Endothelial cell of umbilical vein (primary cell): ENCODE measurements at regions of chr1 and their contacts with region 1.

Region 1: DNA sequence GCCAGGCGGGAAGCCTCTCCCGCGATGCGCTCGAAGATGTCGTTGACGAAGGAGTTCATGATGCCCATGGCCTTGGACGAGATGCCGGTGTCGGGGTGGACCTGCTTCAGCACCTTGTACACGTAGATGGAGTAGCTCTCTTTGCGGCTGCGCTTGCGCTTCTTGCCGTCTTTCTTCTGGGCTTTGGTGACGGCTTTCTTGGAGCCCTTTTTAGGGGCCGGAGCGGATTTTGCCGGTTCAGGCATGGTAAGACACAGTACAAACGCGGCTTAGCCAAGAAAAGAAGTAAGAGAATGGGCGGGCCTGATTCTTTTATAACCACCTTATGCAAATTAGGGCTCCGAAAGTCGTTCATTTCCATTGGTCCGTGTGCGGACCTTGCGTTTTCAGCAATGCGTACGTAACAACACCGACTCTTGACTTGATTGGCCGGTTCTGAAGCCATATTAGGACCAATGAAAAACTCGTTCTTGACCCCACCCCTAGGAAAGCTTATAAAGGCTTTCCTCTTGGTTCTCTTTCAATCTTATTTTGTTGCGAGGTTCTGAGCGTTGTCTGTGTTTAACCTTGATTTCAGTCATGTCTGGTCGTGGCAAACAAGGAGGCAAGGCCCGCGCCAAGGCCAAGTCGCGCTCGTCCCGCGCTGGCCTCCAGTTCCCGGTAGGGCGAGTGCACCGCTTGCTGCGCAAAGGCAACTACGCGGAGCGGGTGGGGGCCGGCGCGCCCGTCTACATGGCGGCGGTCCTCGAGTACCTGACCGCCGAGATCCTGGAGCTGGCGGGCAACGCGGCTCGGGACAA is 12.8 kb upstream of the BOLA1 start:
- DNase-seq: peak; percentile 98
- H3K4me3 ChIP-seq: peak overlapping the region; percentile 19 to 91 (median 67)
- H3K27ac ChIP-seq: peak overlapping the region; percentile 97
- H3K4me1 ChIP-seq: peaks cover 16% of the 10 kb centered on the region
- H3K27me3 ChIP-seq: no peaks in the 10 kb centered on the region
- CTCF ChIP-seq: no peak
- POLR2A ChIP-seq: peak; percentile 97

Region 2: DNA sequence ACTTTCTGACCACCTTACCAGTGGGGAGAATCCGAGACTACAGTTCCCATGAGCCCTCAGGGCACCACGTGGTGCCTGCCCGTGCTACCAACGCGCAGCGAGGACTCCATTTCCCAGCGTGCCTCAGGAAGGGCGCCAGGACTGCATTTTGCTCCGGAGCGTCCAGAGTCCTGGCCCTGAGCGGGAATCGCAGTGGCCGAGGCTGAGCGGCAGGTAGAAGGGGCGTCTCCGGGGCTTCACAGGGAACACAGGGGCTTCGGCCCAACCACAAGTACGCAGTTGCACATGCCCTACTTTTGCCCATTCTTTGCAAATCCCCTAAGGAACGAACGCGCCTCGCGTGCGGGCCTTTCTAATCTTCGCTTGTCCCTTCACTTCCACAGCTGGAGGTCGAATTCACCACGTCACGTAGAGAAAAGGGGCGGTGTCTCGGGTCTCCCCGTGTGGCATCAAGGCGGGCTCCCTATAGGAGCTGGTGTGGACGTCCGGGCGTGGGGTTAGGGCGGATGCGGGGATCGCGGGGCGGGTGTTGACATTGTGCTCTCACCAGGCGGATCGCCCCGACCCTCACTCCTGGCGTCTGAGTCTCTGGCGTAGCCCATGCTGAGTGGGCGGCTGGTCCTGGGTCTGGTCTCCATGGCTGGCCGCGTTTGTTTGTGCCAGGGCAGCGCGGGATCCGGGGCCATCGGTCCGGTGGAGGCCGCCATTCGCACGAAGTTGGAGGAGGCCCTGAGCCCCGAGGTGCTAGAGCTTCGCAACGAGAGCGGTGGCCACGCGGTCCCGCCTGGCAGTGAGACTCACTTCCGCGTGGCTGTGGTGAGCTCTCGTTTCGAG is 13.1 kb after region 1 on chr1 and contains the start of gene BOLA1:
- CTCF ChIA-PET with region 1: interaction called, 6 read pairs
- POLR2A ChIA-PET with region 1: interaction called, 13 read pairs
- dilution Hi-C with region 1: no loop called
- intact Hi-C with region 1: loop called (anchors 1 kb)
- DNase-seq: peak; percentile 92
- H3K4me3 ChIP-seq: peak within 1 kb of the TSS in 2 of 3 experiments; percentile 12 to 55
- H3K27ac ChIP-seq: peak within 1 kb of the TSS; percentile 12
- H3K4me1 ChIP-seq: peaks cover 5% of the 10 kb centered on the region
- H3K27me3 ChIP-seq: no peaks in the 10 kb centered on the region
- CTCF ChIP-seq: no peak
- POLR2A ChIP-seq: peak; percentile 72
- total RNA-seq, gene BOLA1: 7.0 and 10.8 TPM in 2 replicates

Region 3: DNA sequence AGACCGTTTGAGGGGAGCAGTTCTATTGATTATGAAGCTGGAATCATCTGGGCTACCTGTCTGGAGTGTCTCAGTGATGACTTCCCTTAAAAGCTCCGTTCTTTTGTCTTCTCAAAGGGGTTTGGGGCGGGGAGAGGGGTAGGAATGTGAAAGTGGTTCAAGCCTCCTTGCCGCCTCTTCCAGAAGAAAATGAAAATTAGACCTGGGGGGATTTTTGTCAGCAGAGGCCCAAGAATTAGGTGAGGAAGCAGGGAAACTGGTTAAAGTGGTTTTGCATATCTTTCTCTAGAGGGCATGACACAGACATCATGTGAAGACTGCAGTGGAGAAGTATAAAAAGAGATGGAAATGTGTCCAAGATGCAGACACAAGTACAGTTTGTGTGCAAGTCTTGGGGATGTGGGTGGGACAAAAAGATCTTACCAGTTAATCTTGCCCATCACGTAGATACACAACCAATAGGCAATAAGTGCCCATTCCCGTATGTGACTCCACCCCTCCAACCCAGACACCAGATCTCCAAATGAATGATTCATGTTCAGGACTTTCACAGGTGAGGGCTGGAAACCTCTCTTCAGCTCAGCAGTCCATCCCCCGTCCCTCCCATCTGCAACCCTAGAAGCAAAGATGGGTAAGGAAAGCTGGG is 50.6 kb after region 1 on chr1:
- CTCF ChIA-PET with region 1: interaction called, 38 read pairs
- POLR2A ChIA-PET with region 1: interaction called, 8 read pairs
- dilution Hi-C with region 1: no loop called
- intact Hi-C with region 1: loop called (anchors 1 kb)
- DNase-seq: peak; percentile 36
- H3K4me3 ChIP-seq: peak overlapping the region in 1 of 3 experiments; percentile 29
- H3K27ac ChIP-seq: no peak overlapping the region
- H3K4me1 ChIP-seq: peaks cover 33% of the 10 kb centered on the region
- H3K27me3 ChIP-seq: no peaks in the 10 kb centered on the region
- CTCF ChIP-seq: no peak
- POLR2A ChIP-seq: no peak

Region 4: GRCh38 chr1:149962123-149962548 is 75.5 kb after region 1 on chr1:
- CTCF ChIA-PET with region 1: interaction called, 6 read pairs
- POLR2A ChIA-PET with region 1: no interaction called
- dilution Hi-C with region 1: no loop called
- intact Hi-C with region 1: loop called (anchors 1 kb)
- DNase-seq: peak; percentile 81
- H3K4me3 ChIP-seq: no peak overlapping the region
- H3K27ac ChIP-seq: no peak overlapping the region
- H3K4me1 ChIP-seq: no peaks in the 10 kb centered on the region
- H3K27me3 ChIP-seq: no peaks in the 10 kb centered on the region
- CTCF ChIP-seq: peak; percentile 48 to 53
- POLR2A ChIP-seq: no peak

Region 5: GRCh38 chr1:150051089-150051373 is 164.4 kb after region 1 on chr1:
- CTCF ChIA-PET with region 1: interaction called, 24 read pairs
- POLR2A ChIA-PET with region 1: no interaction called
- dilution Hi-C with region 1: loop called (anchors 25 kb)
- intact Hi-C with region 1: loop called (anchors 1 kb)
- DNase-seq: no peak
- H3K4me3 ChIP-seq: no peak overlapping the region
- H3K27ac ChIP-seq: no peak overlapping the region
- H3K4me1 ChIP-seq: no peaks in the 10 kb centered on the region
- H3K27me3 ChIP-seq: no peaks in the 10 kb centered on the region
- CTCF ChIP-seq: no peak
- POLR2A ChIP-seq: no peak

Region 6: DNA sequence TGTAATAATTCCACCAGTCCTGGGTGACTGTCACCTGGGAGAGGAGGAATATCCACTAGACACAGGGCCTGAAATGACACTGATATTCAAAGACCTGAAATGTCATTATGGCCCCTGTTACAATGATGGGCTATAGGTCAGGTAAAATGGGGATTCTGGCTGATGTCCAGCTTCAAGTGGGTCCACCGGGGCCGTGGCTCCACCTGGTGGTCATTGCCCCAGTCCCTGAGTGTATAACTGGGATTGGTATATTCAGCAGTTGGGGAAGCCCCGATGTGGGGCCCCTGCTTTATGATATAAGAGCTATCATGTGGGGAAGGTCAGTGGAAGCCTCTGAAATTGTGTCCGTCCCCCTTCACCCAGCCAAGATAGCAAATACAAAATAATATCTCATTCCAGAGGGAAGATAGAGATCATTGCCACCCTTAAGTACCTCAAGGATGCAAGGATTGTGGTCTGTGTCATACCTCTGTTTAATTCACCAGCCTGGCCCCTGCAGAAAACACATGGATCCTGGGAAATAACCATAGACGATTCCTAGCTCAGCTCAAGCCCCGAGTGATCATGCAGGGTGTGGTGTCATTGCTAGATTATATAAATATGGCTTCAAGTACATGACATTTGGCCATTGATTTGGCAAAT is 282.5 kb after region 1 on chr1:
- CTCF ChIA-PET with region 1: interaction called, 5 read pairs
- POLR2A ChIA-PET with region 1: no interaction called
- dilution Hi-C with region 1: no loop called
- intact Hi-C with region 1: loop called (anchors 2 kb)
- DNase-seq: peak; percentile 64
- H3K4me3 ChIP-seq: no peak overlapping the region
- H3K27ac ChIP-seq: no peak overlapping the region
- H3K4me1 ChIP-seq: no peaks in the 10 kb centered on the region
- H3K27me3 ChIP-seq: no peaks in the 10 kb centered on the region
- CTCF ChIP-seq: peak; percentile 83 to 85
- POLR2A ChIP-seq: no peak

Region 7: GRCh38 chr1:150221552-150221951 is 335.0 kb after region 1 on chr1:
- CTCF ChIA-PET with region 1: no interaction called
- POLR2A ChIA-PET with region 1: no interaction called
- dilution Hi-C with region 1: no loop called
- intact Hi-C with region 1: no loop called
- DNase-seq: no peak
- H3K4me3 ChIP-seq: no peak overlapping the region
- H3K27ac ChIP-seq: no peak overlapping the region
- H3K4me1 ChIP-seq: no peaks in the 10 kb centered on the region
- H3K27me3 ChIP-seq: no peaks in the 10 kb centered on the region
- CTCF ChIP-seq: peak; percentile 11 to 17
- POLR2A ChIP-seq: no peak